Activated CD4-positive, alpha-beta T cell treated with anti-CD3 and anti-CD28 coated beads for 36 hours (primary cell): ENCODE measurements at regions of chr2 and their contacts with region 1.

Region 1: DNA sequence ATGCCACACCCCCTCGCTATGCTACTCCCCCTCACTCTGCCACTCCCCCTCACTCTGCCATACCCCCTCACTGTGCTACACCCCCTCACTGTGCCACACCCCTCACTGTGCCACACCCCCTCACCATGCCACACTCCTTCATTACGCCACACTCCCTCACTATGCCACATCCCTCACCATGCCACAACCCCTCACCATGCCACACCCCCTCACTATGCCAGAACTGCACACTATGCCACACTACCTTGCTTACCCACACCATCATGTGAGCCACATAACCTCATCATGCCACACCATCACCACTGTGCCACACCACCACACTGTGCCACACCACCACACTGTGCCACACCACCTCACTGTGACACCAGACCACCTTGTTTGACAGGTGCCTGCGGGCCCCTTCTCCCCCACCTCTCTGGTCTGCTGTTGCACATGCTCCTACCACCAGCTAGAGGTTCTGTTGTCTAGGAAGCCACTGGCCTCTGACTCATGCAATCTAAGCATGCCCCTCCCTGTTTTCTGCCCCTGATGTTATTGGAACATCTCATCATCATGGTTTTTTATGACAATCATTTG is 22.0 kb downstream of the MARCHF4 start:
- DNase-seq: peak; percentile 61
- ATAC-seq: peak; percentile 61
- H3K4me3 Mint-ChIP-seq: no peak overlapping the region
- H3K27ac Mint-ChIP-seq: no peak overlapping the region
- H3K4me1 Mint-ChIP-seq: peaks cover 88% of the 10 kb centered on the region
- H3K27me3 Mint-ChIP-seq: no peaks in the 10 kb centered on the region

Region 2: DNA sequence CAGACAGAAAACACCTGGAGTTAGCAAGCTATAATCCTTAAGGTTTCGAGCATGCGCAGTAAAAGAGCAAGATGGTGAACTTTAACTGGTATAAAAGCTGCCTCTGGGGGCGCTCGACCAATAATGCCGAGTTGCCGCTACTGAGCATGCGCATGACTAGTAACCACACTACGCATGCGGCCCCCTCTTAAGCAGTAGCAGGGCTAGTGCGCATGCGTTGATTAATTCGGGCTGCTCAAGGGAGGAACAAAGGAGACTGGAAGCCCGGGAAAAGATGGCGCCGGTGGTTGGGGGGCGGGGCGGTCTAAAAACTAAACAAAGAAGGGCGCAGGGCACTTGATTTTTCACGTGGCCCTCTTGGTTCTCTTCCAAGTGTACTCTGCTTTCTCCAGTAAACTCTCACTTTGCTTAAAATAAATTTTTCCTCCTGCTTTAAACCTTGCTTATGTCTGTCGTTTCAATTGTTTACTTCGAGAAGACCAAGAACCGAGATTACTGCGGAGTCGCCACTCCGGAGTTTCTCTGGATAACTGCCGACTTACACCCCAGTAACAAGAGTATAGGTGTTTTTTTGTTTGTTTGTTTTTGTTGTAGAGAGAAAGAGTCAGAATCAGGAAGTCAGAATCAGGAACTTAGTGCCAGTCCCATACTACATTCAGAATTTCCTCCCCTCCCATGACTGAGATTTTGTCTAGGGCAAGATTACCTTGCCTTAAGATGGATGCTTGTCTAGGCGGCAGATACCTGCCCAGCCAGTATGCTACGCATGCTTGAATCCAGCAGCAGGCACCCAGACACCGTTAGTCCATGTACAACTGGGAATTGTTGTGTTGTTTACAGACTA is 235.4 kb before region 1 on chr2:
- CTCF ChIA-PET with region 1: no interaction called
- POLR2A ChIA-PET with region 1: no interaction called
- intact Hi-C with region 1: loop called in 1 of 2 experiments (anchors 5 kb)
- DNase-seq: peak; percentile 98
- ATAC-seq: peak; percentile 81
- H3K4me3 Mint-ChIP-seq: peak overlapping the region; percentile 79
- H3K27ac Mint-ChIP-seq: peak overlapping the region; percentile 95
- H3K4me1 Mint-ChIP-seq: peaks cover 95% of the 10 kb centered on the region
- H3K27me3 Mint-ChIP-seq: no peaks in the 10 kb centered on the region

Region 3: DNA sequence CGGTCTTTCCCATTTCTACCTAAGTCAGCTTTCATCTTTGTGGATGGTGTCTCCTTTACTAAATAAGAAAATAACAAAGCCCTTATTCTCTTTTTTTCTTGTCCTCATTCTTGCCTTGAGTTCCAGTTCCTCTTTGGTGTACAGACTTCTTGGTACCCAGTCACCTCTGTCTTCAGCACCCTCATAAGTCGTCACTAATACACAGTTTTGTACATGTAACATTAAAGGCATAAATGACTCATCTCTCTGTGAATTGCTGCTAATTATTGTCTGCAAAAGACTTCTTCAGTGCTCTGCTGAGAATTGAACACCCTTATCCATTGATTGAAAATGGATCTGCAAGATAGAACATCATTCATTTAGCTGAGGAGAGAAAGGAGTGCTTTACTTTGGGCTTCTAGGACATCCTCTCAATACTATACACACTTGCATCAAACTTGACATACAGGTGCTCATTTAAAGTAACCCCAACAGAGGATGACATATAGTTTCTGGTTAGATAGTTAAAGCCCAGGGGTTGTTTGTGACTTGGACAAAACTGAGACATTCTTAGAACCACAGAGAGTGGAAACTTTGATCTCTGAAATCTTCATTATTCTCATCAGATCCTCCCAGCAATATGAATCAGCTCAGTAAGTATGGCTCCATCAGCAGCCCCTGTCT is 144.1 kb before region 1 on chr2:
- CTCF ChIA-PET with region 1: interaction called, 3 read pairs
- POLR2A ChIA-PET with region 1: no interaction called
- intact Hi-C with region 1: loop called (anchors 2 to 5 kb)
- DNase-seq: no peak
- ATAC-seq: peak; percentile 88
- H3K4me3 Mint-ChIP-seq: no peak overlapping the region
- H3K27ac Mint-ChIP-seq: peak overlapping the region; percentile 94
- H3K4me1 Mint-ChIP-seq: peaks cover 72% of the 10 kb centered on the region
- H3K27me3 Mint-ChIP-seq: no peaks in the 10 kb centered on the region

Region 4: GRCh38 chr2:216371756-216372702 is 21.7 kb after region 1 on chr2 and contains the start of gene MARCHF4:
- CTCF ChIA-PET with region 1: interaction called, 3 read pairs
- POLR2A ChIA-PET with region 1: no interaction called
- intact Hi-C with region 1: loop called (anchors 1 to 2 kb)
- DNase-seq: peak; percentile 81
- ATAC-seq: peak; percentile 46
- H3K4me3 Mint-ChIP-seq: no peak within 1 kb of the TSS
- H3K27ac Mint-ChIP-seq: no peak within 1 kb of the TSS
- H3K4me1 Mint-ChIP-seq: peaks cover 21% of the 10 kb centered on the region
- H3K27me3 Mint-ChIP-seq: peaks cover 42% of the 10 kb centered on the region
- total RNA-seq, gene MARCHF4: not detected

Region 5: DNA sequence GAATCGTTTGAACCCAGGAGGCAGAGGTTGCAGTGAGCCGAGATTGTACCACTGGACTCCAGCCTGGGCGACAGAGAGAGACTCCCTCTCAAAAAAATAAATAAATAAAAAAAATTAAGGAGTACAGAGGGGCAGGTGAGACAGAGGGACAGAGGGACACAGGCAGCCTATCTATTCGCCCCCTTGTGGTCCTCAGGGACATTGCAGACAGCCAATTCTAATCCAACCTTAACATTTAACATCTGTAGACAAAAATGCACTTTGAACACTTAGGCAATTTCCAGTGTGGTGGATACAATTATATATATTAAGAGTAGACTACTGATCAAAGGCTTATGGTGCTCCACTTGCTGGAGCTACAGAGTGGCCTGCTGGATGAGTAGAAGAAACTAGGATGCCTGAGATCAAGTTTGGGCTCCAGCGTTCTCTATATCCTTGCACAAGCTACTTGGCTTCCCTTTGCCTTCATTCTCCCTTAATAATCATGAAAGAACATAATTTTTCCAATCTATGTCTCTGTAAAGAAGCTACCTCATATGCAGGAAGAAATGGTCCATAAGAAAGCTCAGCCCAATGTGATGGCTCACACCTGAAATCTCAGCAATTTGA is 53.8 kb after region 1 on chr2:
- CTCF ChIA-PET with region 1: interaction called, 12 read pairs
- POLR2A ChIA-PET with region 1: no interaction called
- intact Hi-C with region 1: loop called in 1 of 2 experiments (anchors 5 kb)
- DNase-seq: peak; percentile 65
- ATAC-seq: peak; percentile 72
- H3K4me3 Mint-ChIP-seq: no peak overlapping the region
- H3K27ac Mint-ChIP-seq: no peak overlapping the region
- H3K4me1 Mint-ChIP-seq: no peaks in the 10 kb centered on the region
- H3K27me3 Mint-ChIP-seq: no peaks in the 10 kb centered on the region

Region 6: GRCh38 chr2:216498418-216499413 is 148.4 kb after region 1 on chr2 and contains the start of gene RPL37A:
- CTCF ChIA-PET with region 1: no interaction called
- POLR2A ChIA-PET with region 1: no interaction called
- intact Hi-C with region 1: loop called in 1 of 2 experiments (anchors 2 kb)
- DNase-seq: peak; percentile 95
- ATAC-seq: peak; percentile 96
- H3K4me3 Mint-ChIP-seq: peak within 1 kb of the TSS; percentile 98
- H3K27ac Mint-ChIP-seq: peak within 1 kb of the TSS; percentile 96
- H3K4me1 Mint-ChIP-seq: peaks cover 45% of the 10 kb centered on the region
- H3K27me3 Mint-ChIP-seq: no peaks in the 10 kb centered on the region
- total RNA-seq, gene RPL37A: 3,228 to 4,134 TPM